ENCODE measurements at regions of chr10 and their contacts with region 1.

Region 1: GRCh38 chr10:22573820-22574569 is 140.4 kb downstream of the PIP4K2A start:
- DNase-seq: no peak
- H3K4me3 Mint-ChIP-seq: no peak overlapping the region
- H3K27ac Mint-ChIP-seq: peak overlapping the region; percentile 44
- H3K4me1 Mint-ChIP-seq: peaks cover 46% of the 10 kb centered on the region
- H3K27me3 Mint-ChIP-seq: no peaks in the 10 kb centered on the region

Region 2: DNA sequence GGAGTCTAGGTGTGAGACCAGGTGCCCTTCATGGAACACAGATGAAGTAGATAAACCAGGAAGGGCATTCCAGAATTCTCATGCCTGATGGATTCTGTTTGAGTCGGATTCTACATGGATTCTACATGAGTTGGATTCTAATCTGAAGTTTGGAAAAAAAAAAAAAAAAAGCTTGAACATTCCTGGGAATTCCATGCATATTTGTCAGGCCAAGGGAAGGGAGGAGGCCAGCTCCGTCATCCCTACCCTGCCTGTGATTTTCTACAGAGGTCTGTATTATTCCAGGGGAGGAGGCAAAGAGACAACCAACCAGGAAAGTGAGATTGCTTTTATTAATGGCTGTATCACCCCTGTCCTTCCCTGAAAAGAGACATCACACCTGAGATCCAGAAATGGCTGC is 328.4 kb before region 1 on chr10:
- intact Hi-C with region 1: loop called (anchors 2 kb)
- DNase-seq: no peak
- H3K4me3 Mint-ChIP-seq: no peak overlapping the region
- H3K27ac Mint-ChIP-seq: no peak overlapping the region
- H3K4me1 Mint-ChIP-seq: peaks cover 38% of the 10 kb centered on the region
- H3K27me3 Mint-ChIP-seq: no peaks in the 10 kb centered on the region

Region 3: GRCh38 chr10:22436884-22437619 is 136.9 kb before region 1 on chr10:
- intact Hi-C with region 1: loop called (anchors 5 kb)
- DNase-seq: peak; percentile 80
- H3K4me3 Mint-ChIP-seq: peak overlapping the region; percentile 91
- H3K27ac Mint-ChIP-seq: peak overlapping the region; percentile 96
- H3K4me1 Mint-ChIP-seq: peaks cover 49% of the 10 kb centered on the region
- H3K27me3 Mint-ChIP-seq: peaks cover 9% of the 10 kb centered on the region

Region 4: GRCh38 chr10:22630234-22631174 is 56.5 kb after region 1 on chr10:
- intact Hi-C with region 1: loop called (anchors 1 kb)
- DNase-seq: no peak
- H3K4me3 Mint-ChIP-seq: peak overlapping the region; percentile 74
- H3K27ac Mint-ChIP-seq: peak overlapping the region; percentile 100
- H3K4me1 Mint-ChIP-seq: peaks cover 94% of the 10 kb centered on the region
- H3K27me3 Mint-ChIP-seq: no peaks in the 10 kb centered on the region

Region 5: GRCh38 chr10:22682237-22683139 is 108.5 kb after region 1 on chr10:
- intact Hi-C with region 1: loop called (anchors 1 kb)
- DNase-seq: peak; percentile 63
- H3K4me3 Mint-ChIP-seq: peak overlapping the region; percentile 76
- H3K27ac Mint-ChIP-seq: peak overlapping the region; percentile 99
- H3K4me1 Mint-ChIP-seq: peaks cover 87% of the 10 kb centered on the region
- H3K27me3 Mint-ChIP-seq: no peaks in the 10 kb centered on the region

Measured in activated T-helper 1 cell treated with anti-CD3 and anti-CD28 coated beads, Interleukin-12 subunit alpha, Interleukin-12 subunit beta, Interleukin-2, Interleukin-4 antibody, amounts not matched to agents 30 ng/mL and 10 ng/mL and 1 ng/mL, durations not matched to agents 14 hours and 24 hours and 36 hours (primary cell).